Activated B cell treated with CpG ODN at 0.5 μM for 24 hours (primary cell): ENCODE measurements at regions of chr7 and their contacts with region 1.

Region 1: DNA sequence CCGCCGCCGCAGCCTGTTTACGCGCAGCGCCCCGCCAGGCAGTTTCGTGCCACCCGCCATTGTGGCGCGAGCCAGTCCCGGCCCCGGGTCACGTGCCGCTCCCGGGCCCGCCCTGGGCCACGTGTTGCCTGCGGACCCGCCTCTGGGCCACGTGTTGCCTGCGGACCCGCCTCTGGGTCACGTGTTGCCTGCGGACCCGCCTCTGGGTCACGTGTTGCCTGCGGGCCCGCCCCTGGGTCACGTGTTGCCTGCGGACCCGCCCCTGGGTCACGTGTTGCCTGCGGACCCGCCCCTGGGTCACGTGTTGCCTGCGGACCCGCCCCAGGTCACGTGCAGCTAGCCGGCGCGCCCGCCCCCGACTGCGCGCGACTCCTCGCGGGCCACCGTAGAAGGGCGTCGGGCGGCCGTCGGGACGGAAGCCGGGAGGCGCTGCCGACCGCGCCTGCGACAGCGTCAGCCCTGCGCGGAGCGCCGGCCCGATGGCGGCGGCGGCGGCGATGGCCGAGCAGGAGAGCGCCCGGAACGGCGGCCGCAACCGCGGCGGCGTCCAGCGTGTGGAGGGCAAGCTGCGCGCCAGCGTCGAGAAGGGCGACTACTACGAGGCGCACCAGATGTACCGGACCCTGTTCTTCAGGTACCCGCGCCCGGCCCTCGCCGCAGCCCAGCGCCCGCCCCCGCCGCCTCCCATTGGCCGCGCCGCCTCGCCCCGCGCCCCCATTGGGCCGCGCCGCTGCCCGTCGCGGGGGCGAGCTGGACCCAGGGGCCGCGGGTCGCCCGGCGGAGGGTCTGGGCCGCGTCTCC is at the start of gene GET4:
- DNase-seq: peak; percentile 98
- ATAC-seq: peak; percentile 79
- H3K4me3 Mint-ChIP-seq: peak within 1 kb of the TSS; percentile 91
- H3K27ac Mint-ChIP-seq: peak within 1 kb of the TSS; percentile 87
- H3K4me1 Mint-ChIP-seq: peaks cover 35% of the 10 kb centered on the region
- H3K27me3 Mint-ChIP-seq: no peaks in the 10 kb centered on the region
- CTCF ChIP-seq: no peak
- total RNA-seq, gene GET4: 40.5 and 41.4 TPM in 2 replicates

Region 2: DNA sequence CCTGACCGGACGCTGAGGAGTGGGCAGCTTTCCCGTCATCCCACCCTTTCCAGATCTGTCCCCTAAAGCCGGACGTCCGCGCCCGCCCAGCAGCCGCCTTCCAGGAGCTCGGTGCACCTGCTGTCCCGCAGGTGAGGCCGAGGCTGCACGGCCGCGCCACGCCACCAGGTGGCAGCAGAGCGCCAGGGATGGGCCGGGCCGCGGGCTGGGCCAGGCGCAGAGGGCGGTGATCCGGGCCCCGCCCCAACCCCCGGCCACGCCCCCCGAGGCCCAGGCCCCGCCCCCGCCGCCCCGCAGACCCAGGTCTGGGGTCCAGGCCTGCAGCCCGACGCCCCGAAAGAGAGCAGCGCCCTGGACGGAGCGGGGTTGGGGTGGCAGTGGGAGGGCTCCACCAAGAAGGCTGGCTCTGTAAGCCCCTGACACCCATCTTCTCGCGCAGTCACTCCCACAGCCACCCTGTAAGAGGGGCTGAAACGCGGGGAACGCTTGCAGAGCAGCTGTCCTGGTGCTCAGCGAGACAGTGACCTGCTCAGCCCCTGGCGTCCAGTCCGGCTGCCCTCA is 554.2 kb before region 1 on chr7:
- CTCF ChIA-PET with region 1: interaction called, 5 read pairs
- POLR2A ChIA-PET with region 1: no interaction called
- intact Hi-C with region 1: loop called (anchors 1 kb)
- DNase-seq: peak; percentile 85
- ATAC-seq: peak; percentile 100
- H3K4me3 Mint-ChIP-seq: no peak overlapping the region
- H3K27ac Mint-ChIP-seq: no peak overlapping the region
- H3K4me1 Mint-ChIP-seq: peaks cover 2% of the 10 kb centered on the region
- H3K27me3 Mint-ChIP-seq: peaks cover 26% of the 10 kb centered on the region
- CTCF ChIP-seq: peak; percentile 66

Region 3: DNA sequence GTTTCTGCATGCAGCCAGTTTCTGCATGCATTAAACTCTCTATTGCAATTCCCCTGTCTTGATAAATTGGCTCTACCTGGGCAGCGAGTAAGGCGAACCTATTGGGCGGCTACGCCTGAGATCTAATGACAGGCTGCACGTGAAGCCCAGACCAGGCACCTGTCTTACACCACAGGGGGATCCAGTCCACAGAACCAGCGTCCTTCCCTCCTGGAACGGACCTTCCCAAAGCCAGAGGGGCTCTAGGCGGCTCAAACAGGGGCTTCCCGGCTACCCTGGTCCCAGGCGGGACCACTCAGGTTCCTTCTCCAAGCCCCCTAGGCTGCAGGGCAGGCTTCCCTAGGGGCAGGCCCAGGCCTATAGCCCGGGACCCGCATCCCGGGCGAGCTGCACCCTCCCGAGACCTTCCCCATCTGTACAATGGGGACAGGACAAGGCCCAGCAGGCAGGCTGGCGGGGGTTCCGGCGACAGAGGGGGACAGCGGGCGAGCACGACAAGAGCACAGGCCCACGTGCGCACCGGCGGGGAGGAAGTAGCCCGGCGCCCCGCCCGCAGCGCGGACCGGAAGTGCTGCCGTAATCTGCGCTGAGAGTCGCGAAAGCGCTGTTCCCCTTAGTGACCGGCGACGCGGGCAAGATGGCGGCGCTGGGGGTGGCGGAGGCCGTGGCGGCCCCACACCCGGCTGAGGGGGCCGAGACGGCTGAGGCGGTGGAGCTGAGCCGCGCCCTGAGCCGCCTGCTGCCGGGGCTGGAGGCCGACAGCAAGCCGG is 150.1 kb before region 1 on chr7 and contains the start of gene DNAAF5:
- CTCF ChIA-PET with region 1: no interaction called
- POLR2A ChIA-PET with region 1: interaction called, 3 read pairs
- intact Hi-C with region 1: loop called (anchors 2 kb)
- DNase-seq: peak; percentile 87
- ATAC-seq: peak; percentile 89
- H3K4me3 Mint-ChIP-seq: peak within 1 kb of the TSS; percentile 83
- H3K27ac Mint-ChIP-seq: peak within 1 kb of the TSS; percentile 65
- H3K4me1 Mint-ChIP-seq: peaks cover 22% of the 10 kb centered on the region
- H3K27me3 Mint-ChIP-seq: no peaks in the 10 kb centered on the region
- CTCF ChIP-seq: no peak
- total RNA-seq, gene DNAAF5: 23.5 and 25.9 TPM in 2 replicates

Region 4: DNA sequence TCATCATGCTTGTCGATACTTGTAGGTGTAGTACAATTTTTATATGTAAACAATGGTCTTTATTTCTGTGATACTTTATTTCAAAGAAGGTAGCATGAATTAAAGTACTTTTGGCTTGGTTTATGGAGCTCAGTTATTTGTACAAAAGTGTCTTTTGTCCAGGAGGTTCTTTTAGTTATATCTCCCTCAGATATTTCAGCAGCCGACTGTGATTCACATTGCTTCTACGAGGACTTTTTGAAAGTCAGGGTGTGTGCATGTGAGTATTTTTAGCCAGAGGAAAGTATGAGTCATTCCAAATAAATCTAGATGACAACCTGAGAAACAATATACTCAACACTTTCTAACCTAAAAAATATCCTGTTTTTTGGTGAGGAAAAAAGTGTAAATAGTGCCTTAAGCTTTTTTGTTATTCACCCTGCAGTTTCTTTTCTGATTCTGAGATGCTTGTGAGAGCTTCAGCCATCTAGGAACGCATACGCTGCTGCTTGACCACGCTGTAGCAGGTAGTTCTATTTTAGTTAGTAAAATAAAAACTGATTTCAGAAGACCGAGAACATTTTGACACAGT is 44.7 kb before region 1 on chr7:
- CTCF ChIA-PET with region 1: interaction called, 4 read pairs
- POLR2A ChIA-PET with region 1: interaction called, 3 read pairs
- intact Hi-C with region 1: loop called (anchors 1 kb)
- DNase-seq: no peak
- ATAC-seq: peak; percentile 67
- H3K4me3 Mint-ChIP-seq: peak overlapping the region; percentile 74
- H3K27ac Mint-ChIP-seq: peak overlapping the region; percentile 94
- H3K4me1 Mint-ChIP-seq: peaks cover 47% of the 10 kb centered on the region
- H3K27me3 Mint-ChIP-seq: no peaks in the 10 kb centered on the region
- CTCF ChIP-seq: no peak

Region 5: GRCh38 chr7:954330-955238 is 78.2 kb after region 1 on chr7 and contains the start of gene ADAP1:
- CTCF ChIA-PET with region 1: no interaction called
- POLR2A ChIA-PET with region 1: no interaction called
- intact Hi-C with region 1: loop called (anchors 2 kb)
- DNase-seq: peak; percentile 57
- ATAC-seq: peak; percentile 73
- H3K4me3 Mint-ChIP-seq: peak within 1 kb of the TSS; percentile 70
- H3K27ac Mint-ChIP-seq: no peak within 1 kb of the TSS
- H3K4me1 Mint-ChIP-seq: peaks cover 18% of the 10 kb centered on the region
- H3K27me3 Mint-ChIP-seq: peaks cover 10% of the 10 kb centered on the region
- CTCF ChIP-seq: no peak
- total RNA-seq, gene ADAP1: 9.4 and 11.9 TPM in 2 replicates

Region 6: DNA sequence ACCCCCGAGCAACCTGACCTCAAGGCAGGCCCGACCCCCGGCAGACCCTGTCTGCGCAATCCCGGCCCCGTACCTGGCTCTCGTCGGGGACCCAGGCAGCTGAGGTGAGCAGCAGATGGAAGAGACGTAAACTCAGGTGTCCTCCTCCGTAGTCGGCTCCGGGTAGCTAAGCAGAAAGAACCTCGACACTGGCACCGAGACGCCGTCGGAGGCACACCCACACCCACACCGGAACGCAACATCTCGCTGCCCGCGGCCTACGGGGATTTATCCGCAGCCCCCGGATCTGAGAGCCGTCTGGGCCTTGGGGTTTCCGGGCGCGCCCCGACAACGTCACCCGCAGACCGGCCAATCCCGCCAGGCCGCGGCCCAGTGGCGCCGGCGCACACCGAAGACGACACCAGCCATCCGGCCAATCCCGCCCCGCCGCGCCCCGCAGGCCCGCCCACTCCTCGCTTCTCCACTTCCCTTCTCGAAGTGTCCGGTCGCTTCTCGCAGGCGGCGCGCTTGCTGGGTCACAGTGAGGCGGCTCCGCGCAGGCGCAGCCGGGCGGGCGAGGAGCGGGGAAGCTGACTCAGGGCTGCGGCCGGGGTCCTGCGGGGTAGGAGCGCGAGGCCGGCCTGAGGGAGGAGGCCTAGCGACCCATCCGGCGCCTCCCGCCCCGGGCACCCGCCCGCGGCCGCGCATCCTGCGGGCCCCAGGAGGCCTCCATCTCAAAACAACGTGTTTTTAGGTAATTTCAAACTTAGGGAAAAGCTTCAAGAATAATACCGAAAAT is 283.7 kb after region 1 on chr7 and contains the start of gene ZFAND2A:
- CTCF ChIA-PET with region 1: no interaction called
- POLR2A ChIA-PET with region 1: no interaction called
- intact Hi-C with region 1: loop called (anchors 1 kb)
- DNase-seq: peak; percentile 99
- ATAC-seq: peak; percentile 97
- H3K4me3 Mint-ChIP-seq: peak within 1 kb of the TSS; percentile 88
- H3K27ac Mint-ChIP-seq: peak within 1 kb of the TSS; percentile 79
- H3K4me1 Mint-ChIP-seq: peaks cover 25% of the 10 kb centered on the region
- H3K27me3 Mint-ChIP-seq: no peaks in the 10 kb centered on the region
- CTCF ChIP-seq: no peak
- total RNA-seq, gene ZFAND2A: 20.4 and 21.6 TPM in 2 replicates

Region 7: DNA sequence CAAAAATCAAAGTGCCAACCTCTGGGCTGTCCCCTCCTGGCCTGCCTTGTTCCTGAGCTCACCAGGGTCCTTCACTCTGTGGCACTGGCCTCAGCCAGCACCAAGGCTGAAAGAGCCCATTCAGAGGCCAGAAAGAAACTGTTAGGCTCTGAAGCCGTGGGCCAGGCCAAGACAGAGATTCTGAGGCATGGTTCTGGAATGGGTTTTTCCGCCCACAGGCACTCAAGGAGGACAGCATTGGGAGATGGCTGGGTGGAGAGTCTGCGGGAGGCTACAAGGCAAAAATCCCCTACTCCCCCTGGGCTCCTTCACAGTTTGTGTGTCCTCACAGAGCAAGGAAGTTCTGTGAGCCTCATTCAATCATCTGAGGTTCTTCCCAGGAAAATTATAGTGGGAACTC is 1568.1 kb after region 1 on chr7:
- CTCF ChIA-PET with region 1: no interaction called
- POLR2A ChIA-PET with region 1: no interaction called
- intact Hi-C with region 1: no loop called
- DNase-seq: no peak
- ATAC-seq: no peak
- H3K4me3 Mint-ChIP-seq: no peak overlapping the region
- H3K27ac Mint-ChIP-seq: no peak overlapping the region
- H3K4me1 Mint-ChIP-seq: no peaks in the 10 kb centered on the region
- H3K27me3 Mint-ChIP-seq: no peaks in the 10 kb centered on the region
- CTCF ChIP-seq: no peak